Activated naive CD4-positive, alpha-beta T cell treated with anti-CD3 and anti-CD28 coated beads for 36 hours (primary cell): ENCODE measurements at regions of chr9 and their contacts with region 1.

Region 1: DNA sequence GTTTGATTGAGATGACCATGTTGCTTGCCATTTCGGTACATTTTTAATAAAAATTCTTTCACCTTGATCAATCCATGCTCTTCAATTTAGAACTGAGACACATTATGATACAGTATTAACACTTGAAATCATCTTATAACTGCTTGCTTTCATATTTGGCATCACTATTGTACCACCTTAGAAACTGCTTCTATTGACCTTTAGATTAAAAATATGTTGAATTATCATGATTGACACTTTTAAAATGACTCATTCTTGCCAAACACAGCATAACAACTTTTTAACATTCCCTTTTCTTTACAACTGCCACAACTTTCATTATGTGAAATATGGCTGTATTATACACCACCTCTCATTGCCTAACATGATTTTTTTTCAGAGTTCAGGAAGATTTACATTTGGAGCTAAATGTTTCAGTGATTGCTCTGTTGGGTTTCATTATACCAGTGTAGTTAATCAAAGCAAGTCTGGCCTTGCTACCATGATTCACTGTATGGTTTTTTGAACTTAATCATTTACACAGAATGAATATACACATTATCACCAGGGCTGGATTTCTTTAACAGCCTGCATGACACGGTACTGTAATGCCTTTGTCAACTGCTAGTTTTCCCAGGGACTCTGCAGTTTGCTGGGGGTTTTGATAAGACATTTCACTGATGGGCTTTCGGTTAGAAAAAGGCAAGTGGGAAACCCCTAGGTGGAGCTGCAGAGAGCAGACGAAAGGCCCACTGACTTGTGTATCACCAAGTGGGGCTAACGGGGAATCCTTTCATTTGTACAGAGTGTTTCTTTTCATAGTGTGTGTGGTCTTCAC is 93.6 kb upstream of the TLE4 start:
- DNase-seq: peak; percentile 55
- H3K4me3 Mint-ChIP-seq: no peak overlapping the region
- H3K27ac Mint-ChIP-seq: no peak overlapping the region
- H3K4me1 Mint-ChIP-seq: peaks cover 12% of the 10 kb centered on the region
- H3K27me3 Mint-ChIP-seq: no peaks in the 10 kb centered on the region

Region 2: GRCh38 chr9:79542735-79543620 is 64.8 kb after region 1 on chr9:
- CTCF ChIA-PET with region 1: interaction called, 4 read pairs
- intact Hi-C with region 1: loop called (anchors 5 kb)
- DNase-seq: no peak
- H3K4me3 Mint-ChIP-seq: no peak overlapping the region
- H3K27ac Mint-ChIP-seq: no peak overlapping the region
- H3K4me1 Mint-ChIP-seq: peaks cover 18% of the 10 kb centered on the region
- H3K27me3 Mint-ChIP-seq: peaks cover 2% of the 10 kb centered on the region

Region 3: DNA sequence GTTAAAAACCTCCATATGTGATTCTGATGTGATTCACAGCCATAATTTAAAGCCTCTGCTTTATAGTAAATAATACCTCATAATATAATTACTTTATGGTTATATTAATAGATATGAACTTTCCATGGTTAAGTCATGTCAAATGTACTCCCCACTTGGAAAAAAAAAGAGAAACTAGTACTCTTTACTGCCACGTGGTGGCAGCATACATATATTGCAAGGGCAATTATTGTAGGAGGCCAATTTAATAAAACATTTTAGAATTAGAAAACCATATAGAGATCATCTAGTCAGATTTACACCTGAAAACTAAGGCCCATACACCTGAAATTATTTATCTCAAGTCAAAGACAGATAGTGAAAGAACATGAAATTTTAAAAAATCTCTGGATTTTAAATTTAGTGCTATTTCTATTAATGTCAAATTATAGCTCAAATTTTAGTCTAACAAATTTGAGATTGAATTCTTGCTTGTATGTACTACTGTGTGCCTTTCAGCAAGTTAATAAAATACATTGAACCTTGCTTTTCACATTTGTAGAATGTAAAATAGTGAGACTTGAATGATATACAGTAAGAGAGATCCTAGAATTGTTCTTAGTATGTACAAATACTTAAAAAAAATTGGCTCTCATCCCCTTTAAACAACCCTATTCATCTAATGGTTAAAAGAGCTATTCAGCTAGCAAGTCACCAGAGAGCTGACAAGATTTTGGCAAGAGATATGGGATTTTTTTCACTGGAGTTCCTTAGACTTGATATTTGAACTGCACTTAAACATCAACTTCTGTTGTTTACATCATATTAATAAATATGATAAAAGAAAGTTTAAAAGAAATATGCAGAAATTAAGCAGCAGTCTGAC is 697.4 kb after region 1 on chr9:
- CTCF ChIA-PET with region 1: no interaction called
- intact Hi-C with region 1: loop called (anchors 10 kb)
- DNase-seq: peak; percentile 28
- H3K4me3 Mint-ChIP-seq: no peak overlapping the region
- H3K27ac Mint-ChIP-seq: no peak overlapping the region
- H3K4me1 Mint-ChIP-seq: no peaks in the 10 kb centered on the region
- H3K27me3 Mint-ChIP-seq: peaks cover 4% of the 10 kb centered on the region